Mammary epithelial cell (primary cell): ENCODE measurements at regions of chr4 and their contacts with region 1.

Region 1: GRCh38 chr4:1826531-1827350 is 29.2 kb downstream of the LETM1 start:
- DNase-seq: no peak
- H3K4me3 ChIP-seq: no peak overlapping the region
- H3K27ac ChIP-seq: no peak overlapping the region
- H3K4me1 ChIP-seq: no peaks in the 10 kb centered on the region
- H3K27me3 ChIP-seq: no peaks in the 10 kb centered on the region
- CTCF ChIP-seq: no peak

Region 2: GRCh38 chr4:1628892-1629698 is 197.6 kb before region 1 on chr4:
- CTCF ChIA-PET with region 1: no interaction called
- dilution Hi-C with region 1: loop called (anchors 10 kb)
- in situ Hi-C with region 1: no loop called
- intact Hi-C with region 1: no loop called
- DNase-seq: peak; percentile 17
- H3K4me3 ChIP-seq: no peak overlapping the region
- H3K27ac ChIP-seq: no peak overlapping the region
- H3K4me1 ChIP-seq: no peaks in the 10 kb centered on the region
- H3K27me3 ChIP-seq: no peaks in the 10 kb centered on the region
- CTCF ChIP-seq: peak; percentile 89 to 97

Region 3: DNA sequence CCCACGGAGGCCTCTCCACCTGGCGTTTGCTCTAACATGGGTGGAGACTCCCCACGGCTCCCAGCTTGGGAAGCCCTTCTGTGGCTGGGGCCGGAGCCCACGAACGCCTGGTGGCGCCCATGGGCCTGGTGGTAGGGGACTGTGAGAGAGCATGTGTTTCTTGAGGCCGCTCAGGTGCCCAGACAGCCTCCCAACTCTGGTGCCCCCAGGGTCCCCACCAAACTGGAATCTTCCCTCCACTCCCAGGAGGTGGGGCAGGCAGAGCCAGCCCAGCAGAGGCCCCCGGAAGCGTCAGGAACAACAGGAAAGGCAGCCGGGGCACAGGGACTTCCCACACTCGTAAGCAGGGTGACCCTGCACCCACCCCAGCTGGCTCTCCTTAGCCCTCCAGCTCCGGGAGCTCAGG is 66.9 kb before region 1 on chr4:
- CTCF ChIA-PET with region 1: no interaction called
- dilution Hi-C with region 1: loop called (anchors 5 kb)
- in situ Hi-C with region 1: no loop called
- intact Hi-C with region 1: no loop called
- DNase-seq: no peak
- H3K4me3 ChIP-seq: no peak overlapping the region
- H3K27ac ChIP-seq: no peak overlapping the region
- H3K4me1 ChIP-seq: peaks cover 14% of the 10 kb centered on the region
- H3K27me3 ChIP-seq: no peaks in the 10 kb centered on the region
- CTCF ChIP-seq: no peak

Region 4: GRCh38 chr4:1784789-1785591 is 41.8 kb before region 1 on chr4:
- CTCF ChIA-PET with region 1: no interaction called
- dilution Hi-C with region 1: loop called (anchors 5 kb)
- in situ Hi-C with region 1: no loop called
- intact Hi-C with region 1: no loop called
- DNase-seq: no peak
- H3K4me3 ChIP-seq: no peak overlapping the region
- H3K27ac ChIP-seq: no peak overlapping the region
- H3K4me1 ChIP-seq: peaks cover 6% of the 10 kb centered on the region
- H3K27me3 ChIP-seq: peaks cover 2% of the 10 kb centered on the region
- CTCF ChIP-seq: no peak

Region 5: DNA sequence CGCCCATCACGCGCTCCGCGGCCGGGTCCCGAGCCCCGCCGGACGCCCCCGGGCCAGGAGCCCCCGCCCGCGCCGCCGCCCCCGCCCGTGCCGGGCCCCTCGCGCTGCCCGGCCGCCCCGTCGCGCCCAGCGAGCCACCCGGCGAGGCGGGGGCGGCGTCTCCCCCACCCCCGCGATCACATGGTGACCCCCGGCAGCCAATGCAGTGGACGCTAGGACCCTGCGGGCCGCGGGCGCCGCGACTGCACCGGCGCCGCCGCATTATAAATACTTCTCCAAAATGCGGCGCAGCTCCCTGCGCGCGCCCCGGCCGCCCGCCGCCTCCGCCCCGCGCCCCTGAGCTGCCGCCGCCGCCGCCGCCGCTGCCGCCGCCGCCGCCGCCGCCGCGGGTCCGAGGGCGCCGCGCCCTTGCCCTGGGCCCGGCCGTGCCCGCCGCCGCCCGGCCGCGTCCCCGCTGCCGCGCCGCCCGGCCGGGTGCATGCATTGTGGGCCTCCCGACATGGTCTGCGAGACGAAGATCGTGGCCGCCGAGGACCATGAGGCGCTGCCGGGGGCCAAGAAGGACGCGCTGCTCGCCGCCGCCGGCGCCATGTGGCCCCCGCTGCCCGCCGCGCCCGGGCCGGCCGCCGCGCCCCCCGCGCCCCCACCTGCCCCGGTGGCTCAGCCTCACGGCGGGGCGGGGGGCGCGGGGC is 232.4 kb after region 1 on chr4 and contains the start of gene NAT8L:
- CTCF ChIA-PET with region 1: no interaction called
- dilution Hi-C with region 1: no loop called
- in situ Hi-C with region 1: no loop called
- intact Hi-C with region 1: no loop called
- DNase-seq: no peak
- H3K4me3 ChIP-seq: peak within 1 kb of the TSS in 1 of 3 experiments; percentile 22
- H3K27ac ChIP-seq: no peak within 1 kb of the TSS
- H3K4me1 ChIP-seq: peaks cover 3% of the 10 kb centered on the region
- H3K27me3 ChIP-seq: peaks cover 16% of the 10 kb centered on the region
- CTCF ChIP-seq: no peak
- total RNA-seq, gene NAT8L: 0.14 TPM in 1 of 2 donors, not detected in the other